ENCODE measurements at regions of chr18 and their contacts with region 1.

Region 1: DNA sequence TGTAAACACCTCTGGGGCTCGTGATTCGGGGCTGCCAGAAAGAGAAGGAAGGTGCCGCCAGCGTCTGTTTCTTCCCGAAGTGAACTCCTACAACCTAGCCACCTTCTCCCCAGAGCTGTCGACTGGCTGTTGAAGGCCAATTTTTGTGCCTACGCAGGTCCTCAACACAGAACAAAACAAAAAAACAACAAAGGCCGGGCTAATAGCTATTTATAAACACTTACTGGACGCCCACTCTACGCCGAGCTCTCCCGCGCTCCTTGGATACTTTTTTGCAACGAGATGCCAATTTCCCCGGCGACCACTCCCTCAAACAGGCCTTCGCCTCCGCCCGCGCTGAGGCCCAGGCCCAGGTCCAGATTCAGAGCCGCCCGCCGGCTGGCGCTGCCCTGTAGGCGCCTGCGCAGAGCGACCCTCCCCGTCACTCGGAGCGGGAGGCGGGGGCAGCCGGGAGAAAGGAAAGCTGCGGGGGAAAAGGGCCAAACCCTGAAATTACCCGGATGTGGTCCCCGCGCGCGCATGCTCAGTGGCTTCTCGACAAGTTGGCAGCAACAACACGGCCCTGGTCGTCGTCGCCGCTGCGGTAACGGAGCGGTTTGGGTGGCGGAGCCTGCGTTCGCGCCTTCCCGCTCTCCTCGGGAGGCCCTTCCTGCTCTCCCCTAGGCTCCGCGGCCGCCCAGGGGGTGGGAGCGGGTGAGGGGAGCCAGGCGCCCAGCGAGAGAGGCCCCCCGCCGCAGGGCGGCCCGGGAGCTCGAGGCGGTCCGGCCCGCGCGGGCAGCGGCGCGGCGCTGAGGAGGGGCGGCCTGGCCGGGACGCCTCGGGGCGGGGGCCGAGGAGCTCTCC is at the start of gene SMAD4:
- DNase-seq: peak; percentile 98
- ATAC-seq: peak; percentile 96
- total RNA-seq, gene SMAD4: 94.7 TPM

Region 2: GRCh38 chr18:50947899-50948298 is 82.0 kb before region 1 on chr18:
- intact Hi-C with region 1: no loop called
- DNase-seq: no peak
- ATAC-seq: no peak

Region 3: DNA sequence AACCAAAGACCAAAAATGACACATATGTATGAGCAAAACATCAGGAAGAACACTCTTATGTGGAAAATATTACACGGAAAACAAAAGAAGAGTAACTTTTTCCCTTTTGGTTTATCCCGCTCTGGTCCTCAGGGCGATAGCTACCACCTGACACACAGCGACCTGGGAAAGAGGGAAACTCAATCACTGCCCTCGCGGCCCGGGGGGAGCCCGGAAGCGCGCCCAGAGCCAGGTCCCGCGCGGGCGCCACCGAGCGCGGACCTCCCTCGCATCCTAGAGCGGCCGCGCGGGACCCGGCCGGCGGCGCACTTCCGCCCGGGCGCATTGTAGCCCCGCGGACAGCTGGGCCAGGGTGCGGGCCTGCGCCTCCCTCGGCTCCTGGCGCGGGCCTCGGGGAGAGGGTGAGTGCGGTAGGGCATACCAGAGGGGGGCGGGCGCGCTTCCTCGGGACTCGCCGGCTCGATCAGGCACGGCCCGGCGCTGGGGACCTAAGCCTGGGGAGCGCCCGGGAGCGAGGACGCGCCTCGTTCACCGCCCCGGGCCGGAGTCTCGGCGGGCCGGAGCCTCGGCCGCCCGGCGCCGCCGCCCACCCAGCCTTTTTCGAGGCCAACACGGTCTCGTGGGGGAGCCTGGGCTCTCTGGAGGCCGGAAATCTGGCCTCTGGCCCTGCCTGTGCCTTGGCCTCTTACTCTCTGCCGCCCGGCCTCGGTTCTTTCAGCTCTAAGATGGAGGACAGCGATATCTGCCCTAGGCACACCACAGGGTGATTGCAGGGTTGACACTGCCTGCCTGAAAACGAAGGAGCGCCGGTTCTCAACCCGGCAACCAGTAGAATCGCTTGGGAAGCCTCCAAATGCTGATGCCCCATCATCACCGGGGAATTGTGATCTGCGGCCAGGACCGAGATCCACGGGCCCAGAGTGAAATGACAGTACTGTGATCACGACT is 61.9 kb before region 1 on chr18 and contains the start of gene ELAC1:
- intact Hi-C with region 1: loop called (anchors 2 kb)
- DNase-seq: peak; percentile 90
- ATAC-seq: peak; percentile 98
- total RNA-seq, gene ELAC1: 5.6 TPM

Region 4: DNA sequence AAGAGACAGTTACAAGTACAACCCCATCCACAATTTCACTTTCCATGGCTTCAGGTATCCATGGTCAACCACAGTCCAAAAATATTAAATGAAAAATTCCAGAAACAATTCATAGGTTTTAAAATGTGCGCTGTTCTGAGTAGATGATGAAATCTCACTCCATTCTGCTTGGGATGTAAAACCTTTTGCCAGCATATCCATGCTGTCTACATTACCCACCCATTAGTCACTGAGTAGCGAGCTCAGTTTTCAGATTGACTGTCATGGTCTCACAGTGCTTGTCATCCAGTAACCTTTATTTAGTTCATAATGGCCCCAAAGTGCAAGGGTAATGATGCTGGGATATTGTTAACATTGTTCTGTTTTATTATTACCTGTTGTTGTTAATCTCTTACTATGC is 40.6 kb after region 1 on chr18:
- intact Hi-C with region 1: no loop called
- DNase-seq: no peak
- ATAC-seq: no peak

Region 5: GRCh38 chr18:51229328-51229727 is 199.4 kb after region 1 on chr18:
- intact Hi-C with region 1: no loop called
- DNase-seq: no peak
- ATAC-seq: no peak